ENCODE measurements at regions of chr2 and their contacts with region 1.

Region 1: GRCh38 chr2:109663721-109664120 is 49.6 kb downstream of the SOWAHC start:
- DNase-seq: no peak
- H3K4me3 ChIP-seq: no peak overlapping the region
- H3K4me3 Mint-ChIP-seq: no peak overlapping the region
- H3K27ac Mint-ChIP-seq: no peak overlapping the region
- H3K4me1 ChIP-seq: peaks cover 13% of the 10 kb centered on the region
- H3K4me1 Mint-ChIP-seq: peaks cover 13% of the 10 kb centered on the region
- H3K27me3 ChIP-seq: no peaks in the 10 kb centered on the region
- H3K27me3 Mint-ChIP-seq: no peaks in the 10 kb centered on the region
- CTCF ChIP-seq: no peak

Region 2: GRCh38 chr2:109516445-109517117 is 147.1 kb before region 1 on chr2:
- CTCF ChIA-PET with region 1: no interaction called
- POLR2A ChIA-PET with region 1: no interaction called
- intact Hi-C with region 1: loop called (anchors 1 kb)
- DNase-seq: peak; percentile 75 to 82
- H3K4me3 ChIP-seq: no peak overlapping the region
- H3K4me3 Mint-ChIP-seq: no peak overlapping the region
- H3K27ac Mint-ChIP-seq: no peak overlapping the region
- H3K4me1 ChIP-seq: peaks cover 3% of the 10 kb centered on the region; the same call in 1 of the 2 replicates
- H3K4me1 Mint-ChIP-seq: no peaks in the 10 kb centered on the region
- H3K27me3 ChIP-seq: no peaks in the 10 kb centered on the region
- H3K27me3 Mint-ChIP-seq: no peaks in the 10 kb centered on the region
- CTCF ChIP-seq: peak; percentile 75 to 94

Region 3: DNA sequence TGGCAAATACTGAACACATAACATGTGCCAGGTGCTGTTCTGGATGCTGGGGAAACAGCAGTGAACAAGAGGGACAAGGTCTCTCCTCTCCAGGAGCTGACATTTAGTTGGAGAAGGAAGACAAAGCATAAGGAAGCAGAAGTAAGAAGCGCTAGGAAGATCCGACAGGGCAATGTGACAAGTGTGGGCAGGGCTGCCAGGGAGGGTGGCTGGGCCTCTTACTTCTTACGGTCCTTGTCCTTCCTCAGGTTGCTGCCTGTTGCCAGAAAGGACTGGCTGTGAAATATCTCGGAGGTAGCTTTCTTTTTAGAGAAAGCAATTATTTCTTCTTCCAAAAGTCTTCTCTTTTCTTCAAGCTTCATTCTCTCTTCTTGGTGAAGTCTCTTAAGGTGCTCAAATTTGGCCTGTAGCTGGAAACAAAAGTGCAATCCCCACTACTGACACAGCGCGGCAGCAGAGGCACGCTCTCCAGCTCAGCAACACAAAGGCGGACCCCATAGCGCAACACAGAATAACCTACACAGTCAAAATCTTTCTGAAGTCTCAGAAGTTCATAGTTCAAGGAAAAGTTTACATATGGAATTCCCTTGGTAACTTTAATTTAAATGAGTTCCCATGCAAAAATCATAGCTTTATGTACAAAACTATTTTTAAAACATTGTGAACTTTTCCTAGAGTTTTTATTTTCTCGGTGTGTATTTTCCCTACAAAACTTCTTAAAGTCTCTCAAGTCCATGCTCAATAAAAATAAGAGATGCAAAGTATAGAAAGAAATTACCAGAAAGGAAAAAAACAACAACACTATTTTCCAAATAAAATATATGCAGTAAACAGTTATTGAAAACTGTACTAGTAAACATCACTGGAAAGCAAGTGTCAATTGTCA is 117.7 kb before region 1 on chr2:
- CTCF ChIA-PET with region 1: interaction called, 48 read pairs
- POLR2A ChIA-PET with region 1: no interaction called
- intact Hi-C with region 1: loop called (anchors 1 kb)
- DNase-seq: peak; percentile 60 to 81
- H3K4me3 ChIP-seq: no peak overlapping the region
- H3K4me3 Mint-ChIP-seq: no peak overlapping the region
- H3K27ac Mint-ChIP-seq: no peak overlapping the region
- H3K4me1 ChIP-seq: peaks cover 8% of the 10 kb centered on the region; the same call in 1 of the 2 replicates
- H3K4me1 Mint-ChIP-seq: peaks cover 4% of the 10 kb centered on the region
- H3K27me3 ChIP-seq: no peaks in the 10 kb centered on the region
- H3K27me3 Mint-ChIP-seq: no peaks in the 10 kb centered on the region
- CTCF ChIP-seq: peak; percentile 94 to 97

Region 4: DNA sequence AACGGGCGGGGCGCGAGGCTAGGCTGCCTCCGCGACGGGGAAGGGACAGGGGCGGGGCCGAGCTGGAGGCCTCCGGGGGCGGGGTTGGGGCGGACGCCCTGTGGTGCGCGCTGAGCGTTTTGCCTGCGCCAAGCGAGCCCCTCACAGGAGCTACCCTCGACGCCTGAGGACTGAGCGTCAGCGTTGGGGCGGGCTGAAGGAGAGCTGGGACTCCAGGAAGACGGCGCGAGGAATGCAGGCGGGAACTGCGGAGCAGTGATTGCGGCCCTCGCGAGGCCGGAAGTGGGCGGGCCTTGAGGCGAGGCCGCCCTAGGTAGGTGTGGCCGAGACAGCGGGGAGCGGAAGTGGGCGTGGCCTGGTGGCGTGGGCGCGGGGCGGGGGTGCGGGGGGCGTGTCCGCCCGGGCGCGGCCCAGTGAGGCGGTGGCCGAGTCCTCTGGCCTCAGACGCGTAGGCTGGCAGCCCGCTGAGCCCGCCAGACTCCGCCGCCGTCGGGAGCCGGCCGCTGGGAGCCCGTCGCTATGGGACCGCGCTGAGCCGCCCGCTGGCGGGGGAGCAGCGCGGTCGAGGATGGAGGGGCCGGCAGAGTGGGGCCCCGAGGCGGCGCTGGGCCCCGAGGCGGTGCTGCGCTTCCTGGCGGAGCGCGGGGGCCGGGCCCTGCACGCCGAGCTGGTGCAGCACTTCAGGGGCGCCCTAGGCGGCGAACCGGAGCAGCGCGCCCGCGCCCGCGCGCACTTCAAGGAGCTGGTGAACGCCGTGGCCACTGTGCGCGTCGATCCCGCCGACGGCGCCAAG is 49.6 kb before region 1 on chr2 and contains the starts of genes SEPTIN10 and SOWAHC:
- CTCF ChIA-PET with region 1: interaction called, 27 read pairs
- POLR2A ChIA-PET with region 1: interaction called, 3 read pairs
- intact Hi-C with region 1: loop called (anchors 1 kb)
- DNase-seq: peak; percentile 99 to 100
- H3K4me3 ChIP-seq: peak within 1 kb of the TSS; percentile 73
- H3K4me3 Mint-ChIP-seq: peak within 1 kb of the TSS; percentile 95
- H3K27ac Mint-ChIP-seq: peak within 1 kb of the TSS; percentile 95
- H3K4me1 ChIP-seq: peaks cover 32% of the 10 kb centered on the region
- H3K4me1 Mint-ChIP-seq: peaks cover 24% of the 10 kb centered on the region
- H3K27me3 ChIP-seq: no peaks in the 10 kb centered on the region
- H3K27me3 Mint-ChIP-seq: no peaks in the 10 kb centered on the region
- CTCF ChIP-seq: no peak
- total RNA-seq, gene SEPTIN10: 77.3 and 83.7 TPM in 2 replicates
- total RNA-seq, gene SOWAHC: 20.3 and 21.4 TPM in 2 replicates

Region 5: GRCh38 chr2:109644576-109645275 is 19.0 kb before region 1 on chr2:
- CTCF ChIA-PET with region 1: interaction called, 5 read pairs
- POLR2A ChIA-PET with region 1: interaction called, 3 read pairs
- intact Hi-C with region 1: loop called (anchors 1 kb)
- DNase-seq: peak; percentile 91 to 93
- H3K4me3 ChIP-seq: no peak overlapping the region
- H3K4me3 Mint-ChIP-seq: peak overlapping the region; percentile 55
- H3K27ac Mint-ChIP-seq: peak overlapping the region; percentile 78
- H3K4me1 ChIP-seq: peaks cover 47% of the 10 kb centered on the region
- H3K4me1 Mint-ChIP-seq: peaks cover 25% of the 10 kb centered on the region
- H3K27me3 ChIP-seq: no peaks in the 10 kb centered on the region
- H3K27me3 Mint-ChIP-seq: no peaks in the 10 kb centered on the region
- CTCF ChIP-seq: no peak

Region 6: GRCh38 chr2:109681651-109682380 is 18.1 kb after region 1 on chr2:
- CTCF ChIA-PET with region 1: no interaction called
- POLR2A ChIA-PET with region 1: no interaction called
- intact Hi-C with region 1: no loop called
- DNase-seq: peak in 1 of 2 experiments; percentile 26
- H3K4me3 ChIP-seq: no peak overlapping the region
- H3K4me3 Mint-ChIP-seq: no peak overlapping the region
- H3K27ac Mint-ChIP-seq: peak overlapping the region; percentile 82
- H3K4me1 ChIP-seq: peaks cover 35% of the 10 kb centered on the region
- H3K4me1 Mint-ChIP-seq: peaks cover 39% of the 10 kb centered on the region
- H3K27me3 ChIP-seq: no peaks in the 10 kb centered on the region
- H3K27me3 Mint-ChIP-seq: no peaks in the 10 kb centered on the region
- CTCF ChIP-seq: no peak

Region 7: GRCh38 chr2:109699646-109700045 is 35.9 kb after region 1 on chr2:
- CTCF ChIA-PET with region 1: interaction called, 11 read pairs
- POLR2A ChIA-PET with region 1: no interaction called
- intact Hi-C with region 1: no loop called
- DNase-seq: peak in 1 of 2 experiments; percentile 60
- H3K4me3 ChIP-seq: peak overlapping the region; percentile 19
- H3K4me3 Mint-ChIP-seq: peak overlapping the region; percentile 54
- H3K27ac Mint-ChIP-seq: peak overlapping the region; percentile 60
- H3K4me1 ChIP-seq: peaks cover 56% of the 10 kb centered on the region
- H3K4me1 Mint-ChIP-seq: peaks cover 49% of the 10 kb centered on the region
- H3K27me3 ChIP-seq: no peaks in the 10 kb centered on the region
- H3K27me3 Mint-ChIP-seq: no peaks in the 10 kb centered on the region
- CTCF ChIP-seq: no peak